ENCODE measurements at regions of chr12 and their contacts with region 1.

Region 1: GRCh38 chr12:113221181-113221997 is at the start of gene TPCN1:
- DNase-seq: peak; percentile 100
- H3K4me3 ChIP-seq: peak within 1 kb of the TSS; percentile 97 to 98
- H3K27ac ChIP-seq: peak within 1 kb of the TSS; percentile 91 to 92
- H3K4me1 ChIP-seq: no peaks in the 10 kb centered on the region
- H3K27me3 ChIP-seq: no peaks in the 10 kb centered on the region
- CTCF ChIP-seq: peak in 2 of 4 experiments; percentile 43 to 47
- POLR2A ChIP-seq: peak; percentile 100
- total RNA-seq, gene TPCN1: 52.6 to 65.3 TPM

Region 2: GRCh38 chr12:113184900-113185773 is 36.3 kb before region 1 on chr12 and contains the starts of genes DDX54 and RITA1:
- intact Hi-C with region 1: loop called (anchors 2 kb)
- DNase-seq: peak; percentile 88
- H3K4me3 ChIP-seq: peak within 1 kb of the TSS; percentile 86 to 97
- H3K27ac ChIP-seq: peak within 1 kb of the TSS; percentile 87 to 91
- H3K4me1 ChIP-seq: no peaks in the 10 kb centered on the region
- H3K27me3 ChIP-seq: no peaks in the 10 kb centered on the region
- CTCF ChIP-seq: no peak
- POLR2A ChIP-seq: peak; percentile 35
- total RNA-seq, gene DDX54: 66.3 to 119 TPM
- total RNA-seq, gene RITA1: 29.0 to 39.7 TPM

Region 3: GRCh38 chr12:113334786-113335540 is 113.6 kb after region 1 on chr12 and contains the start of gene SLC8B1:
- intact Hi-C with region 1: loop called (anchors 10 kb)
- DNase-seq: peak; percentile 85
- H3K4me3 ChIP-seq: peak within 1 kb of the TSS; percentile 65 to 83
- H3K27ac ChIP-seq: peak within 1 kb of the TSS; percentile 64 to 75
- H3K4me1 ChIP-seq: no peaks in the 10 kb centered on the region
- H3K27me3 ChIP-seq: no peaks in the 10 kb centered on the region
- CTCF ChIP-seq: peak in 1 of 4 experiments; percentile 26
- POLR2A ChIP-seq: peak; percentile 95
- total RNA-seq, gene SLC8B1: 23.1 to 94.7 TPM